Left colon (tissue), 2 donors: ENCODE measurements at regions of chr1 and their contacts with region 1.

Region 1: GRCh38 chr1:6727535-6727934 is 25.9 kb upstream of the DNAJC11 start:
- DNase-seq: peak in 1 of 2 donors; percentile 61
- ATAC-seq: peak; percentile 34

Region 2: DNA sequence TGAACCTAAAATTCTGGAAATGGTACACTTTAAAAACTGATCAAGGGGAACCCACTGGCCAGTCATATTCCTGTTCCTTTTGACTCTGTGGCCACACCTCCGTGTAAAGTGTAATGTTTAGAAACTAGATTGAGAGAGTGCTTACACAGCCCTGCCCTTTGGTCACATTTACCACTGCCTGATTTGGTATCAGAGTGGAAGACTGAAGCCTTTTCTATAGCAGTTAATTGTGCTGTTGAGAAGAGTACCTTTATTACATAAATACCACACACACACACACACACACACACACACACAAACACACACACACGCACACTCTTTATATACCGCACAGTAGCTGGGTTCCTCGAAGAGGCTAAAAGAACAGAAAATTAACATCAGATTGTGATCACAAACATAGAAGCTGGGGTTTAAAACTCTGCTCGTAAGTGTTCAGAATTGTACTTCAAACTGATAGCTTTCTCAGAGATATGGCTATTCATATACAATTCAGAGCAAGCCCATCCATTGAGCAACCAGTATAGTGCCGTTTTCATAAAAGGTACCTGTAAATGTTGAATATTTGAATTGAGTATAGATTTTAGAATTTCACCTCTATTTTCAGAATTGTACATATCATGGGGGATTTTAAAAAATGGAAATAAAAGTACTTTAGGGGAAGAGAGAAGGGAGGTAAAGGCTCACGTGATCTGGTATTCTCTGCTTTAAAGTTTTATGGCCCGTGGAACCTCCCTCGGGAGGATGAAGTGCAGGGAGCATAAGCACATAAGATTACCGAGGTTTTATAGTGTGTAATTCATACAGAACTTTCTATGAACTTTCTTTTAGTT is 95.2 kb after region 1 on chr1:
- intact Hi-C with region 1: no loop called
- DNase-seq: peak; percentile 43 to 73
- ATAC-seq: peak; percentile 88

Region 3: DNA sequence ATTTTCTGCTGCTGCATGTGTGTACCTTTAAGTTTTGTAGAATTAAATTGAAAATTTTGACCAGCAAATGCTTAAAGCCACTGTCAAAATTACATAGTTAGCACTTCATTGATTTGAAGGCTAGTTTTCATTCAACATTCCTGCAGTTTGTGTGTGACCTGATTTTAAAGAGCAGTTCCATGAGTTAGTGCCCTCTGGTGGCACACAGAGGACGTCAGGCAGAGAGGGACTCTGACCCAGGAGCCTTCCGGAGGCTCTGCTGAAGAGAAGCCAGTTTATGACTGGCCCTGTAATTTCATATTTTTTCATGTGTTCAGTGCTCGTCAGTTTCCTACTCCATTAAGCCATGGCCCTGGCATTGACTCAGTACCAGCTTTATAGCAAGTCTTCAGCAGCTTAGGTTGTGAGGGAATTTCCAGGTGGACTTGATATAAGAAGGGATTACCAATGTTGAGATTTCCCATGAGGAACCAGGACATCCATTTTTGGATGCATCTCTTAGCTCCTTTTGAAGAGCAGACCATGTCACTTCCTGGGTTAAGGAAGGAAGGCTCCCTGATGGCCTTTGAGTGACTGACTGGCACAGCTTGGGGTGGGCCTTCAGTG is 162.4 kb after region 1 on chr1:
- intact Hi-C with region 1: loop called (anchors 10 kb)
- DNase-seq: peak; percentile 64 to 71
- ATAC-seq: peak; percentile 97

Region 4: DNA sequence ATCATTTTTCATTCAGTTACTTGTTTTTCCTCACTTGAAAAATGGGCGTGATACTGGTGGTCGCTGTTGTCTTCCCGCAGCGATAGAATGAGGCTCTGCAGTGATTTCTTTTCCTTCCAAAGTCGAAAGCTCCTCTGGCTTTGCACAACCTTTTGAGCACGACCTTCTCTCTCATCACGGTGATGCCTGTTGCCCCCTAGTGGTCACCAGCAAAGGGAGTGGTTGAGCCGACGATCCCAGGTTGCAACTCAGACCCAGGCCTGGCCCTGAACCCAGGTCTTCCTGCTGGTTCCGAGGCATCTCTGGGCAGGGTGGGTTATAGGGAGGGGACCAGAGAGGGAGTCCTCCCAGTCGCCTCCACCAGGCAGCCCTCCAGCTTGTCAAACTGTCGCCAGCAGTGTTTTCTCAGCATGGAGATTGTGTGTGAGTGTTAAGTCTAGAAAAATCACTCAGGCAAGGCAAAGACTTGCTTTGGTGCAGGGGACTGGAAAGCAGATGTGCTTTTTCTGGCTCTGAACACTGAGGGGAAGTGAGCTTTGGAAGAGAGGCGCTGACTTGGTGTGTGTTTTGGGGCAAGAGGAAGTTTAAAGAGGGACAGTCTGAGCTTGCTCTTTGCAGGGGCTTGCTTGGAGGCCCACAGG is 343.0 kb after region 1 on chr1:
- intact Hi-C with region 1: loop called in 1 of 2 experiments (anchors 5 kb)
- DNase-seq: peak; percentile 50 to 62
- ATAC-seq: peak; percentile 84

Region 5: DNA sequence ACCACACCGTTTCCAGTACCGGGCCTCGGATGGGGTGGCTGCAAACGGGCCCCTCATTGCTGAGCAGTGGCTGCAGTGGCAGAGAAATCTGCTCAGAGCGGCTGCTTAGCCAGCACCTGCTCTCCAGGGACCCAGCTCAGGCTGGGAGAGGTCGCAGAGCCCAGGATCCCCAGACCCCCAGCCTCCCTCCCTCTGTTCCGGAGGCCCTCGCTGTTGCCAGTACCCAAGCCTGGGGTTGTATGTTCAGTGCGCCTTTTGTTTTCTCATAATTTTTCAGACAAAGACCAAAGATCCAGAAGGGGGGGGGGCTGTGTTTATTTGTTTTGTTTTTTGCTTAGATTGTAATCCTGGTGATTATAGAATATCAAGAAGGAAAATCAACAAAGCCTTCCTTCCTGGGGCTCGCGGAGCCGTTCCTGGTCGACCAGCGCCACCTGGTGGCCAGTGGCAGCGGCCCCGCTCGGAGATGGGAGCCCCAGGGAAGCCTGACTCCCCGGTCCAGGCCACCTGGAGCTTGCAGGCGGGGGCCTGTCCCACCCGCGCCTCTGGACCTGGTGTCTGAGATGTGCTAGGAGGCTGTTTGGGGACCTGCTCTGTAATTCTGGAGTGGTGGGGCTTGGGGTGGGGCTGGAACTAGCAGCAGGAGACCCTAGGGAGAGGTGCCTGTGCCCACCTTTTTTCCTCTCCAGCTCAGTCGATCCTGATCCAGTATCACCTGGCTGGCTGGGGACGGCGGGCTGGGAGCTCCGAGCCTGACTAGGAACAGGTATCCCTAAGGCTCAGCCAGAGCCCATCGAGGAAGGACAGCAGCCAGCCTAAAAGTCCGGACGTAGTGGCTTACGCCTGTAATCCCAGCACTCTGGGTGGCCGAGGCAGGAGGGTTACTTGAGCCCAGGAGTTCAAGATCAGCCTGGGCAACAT is 919.7 kb after region 1 on chr1:
- intact Hi-C with region 1: loop called in 1 of 2 experiments (anchors 10 kb)
- DNase-seq: peak in 1 of 2 donors; percentile 77
- ATAC-seq: peak; percentile 65